PC-3 (cell line): ENCODE measurements at regions of chr20 and their contacts with region 1.

Region 1: GRCh38 chr20:2254333-2254732 is 41.5 kb upstream of the TGM3 start:
- DNase-seq: peak; percentile 40
- ATAC-seq: 0 out of 2 replicates have a peak, but pooled peaks have one; percentile 42
- H3K4me3 ChIP-seq: no peak overlapping the region
- H3K27ac ChIP-seq: no peak overlapping the region
- H3K4me1 ChIP-seq: no peaks in the 10 kb centered on the region
- H3K27me3 ChIP-seq: peaks cover 23% of the 10 kb centered on the region; the same call in 1 of the 2 replicates
- CTCF ChIP-seq: no peak

Region 2: GRCh38 chr20:2230716-2231488 is 23.4 kb before region 1 on chr20:
- CTCF ChIA-PET with region 1: no interaction called
- POLR2A ChIA-PET with region 1: no interaction called
- intact Hi-C with region 1: no loop called
- DNase-seq: peak; percentile 22
- ATAC-seq: peak; percentile 48
- H3K4me3 ChIP-seq: no peak overlapping the region
- H3K27ac ChIP-seq: no peak overlapping the region
- H3K4me1 ChIP-seq: no peaks in the 10 kb centered on the region
- H3K27me3 ChIP-seq: peaks cover 19% of the 10 kb centered on the region
- CTCF ChIP-seq: no peak

Region 3: GRCh38 chr20:2295901-2296515 is 41.7 kb after region 1 on chr20 and contains the start of gene TGM3:
- CTCF ChIA-PET with region 1: interaction called, 11 read pairs
- POLR2A ChIA-PET with region 1: no interaction called
- intact Hi-C with region 1: no loop called
- DNase-seq: no peak
- ATAC-seq: no peak
- H3K4me3 ChIP-seq: no peak within 1 kb of the TSS
- H3K27ac ChIP-seq: no peak within 1 kb of the TSS
- H3K4me1 ChIP-seq: no peaks in the 10 kb centered on the region
- H3K27me3 ChIP-seq: peaks cover 60% of the 10 kb centered on the region
- CTCF ChIP-seq: no peak
- total RNA-seq, gene TGM3: not detected in 2 replicates